HEK293 (cell line): ENCODE measurements at regions of chr19 and their contacts with region 1.

Region 1: GRCh38 chr19:29610563-29611271 is 4.6 kb downstream of the POP4 start:
- H3K4me3 ChIP-seq: no peak overlapping the region
- H3K27ac ChIP-seq: no peak overlapping the region
- H3K4me1 ChIP-seq: peaks cover 7% of the 10 kb centered on the region
- CTCF ChIP-seq: peak; percentile 98

Region 2: DNA sequence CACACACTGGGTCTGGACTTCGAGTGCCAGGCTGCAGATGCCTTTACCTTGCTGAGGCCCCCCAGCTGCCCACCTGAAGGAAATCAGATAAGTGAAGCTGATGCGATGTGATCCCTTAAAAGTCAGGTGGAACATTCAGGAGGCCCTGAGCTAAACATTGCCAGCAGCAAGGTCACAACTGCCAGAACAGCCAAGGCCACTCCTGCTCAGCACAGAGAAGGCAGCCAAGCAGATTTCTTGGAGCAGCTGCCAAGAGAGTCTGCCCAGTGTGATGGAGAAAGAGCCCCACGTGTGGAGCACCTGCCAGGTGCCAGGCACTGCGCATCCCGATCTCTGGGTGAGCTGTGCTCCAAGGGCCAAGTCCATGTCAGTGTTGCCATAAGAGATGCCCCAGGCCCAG is 377.1 kb before region 1 on chr19:
- CTCF ChIA-PET with region 1: no interaction called
- POLR2A ChIA-PET with region 1: no interaction called
- H3K4me3 ChIP-seq: no peak overlapping the region
- H3K27ac ChIP-seq: no peak overlapping the region
- H3K4me1 ChIP-seq: no peaks in the 10 kb centered on the region
- CTCF ChIP-seq: no peak

Region 3: GRCh38 chr19:29587518-29587986 is 23.2 kb before region 1 on chr19:
- CTCF ChIA-PET with region 1: interaction called, 16 read pairs
- POLR2A ChIA-PET with region 1: interaction called, 12 read pairs
- H3K4me3 ChIP-seq: no peak overlapping the region
- H3K27ac ChIP-seq: no peak overlapping the region
- H3K4me1 ChIP-seq: peaks cover 18% of the 10 kb centered on the region
- CTCF ChIP-seq: no peak

Region 4: DNA sequence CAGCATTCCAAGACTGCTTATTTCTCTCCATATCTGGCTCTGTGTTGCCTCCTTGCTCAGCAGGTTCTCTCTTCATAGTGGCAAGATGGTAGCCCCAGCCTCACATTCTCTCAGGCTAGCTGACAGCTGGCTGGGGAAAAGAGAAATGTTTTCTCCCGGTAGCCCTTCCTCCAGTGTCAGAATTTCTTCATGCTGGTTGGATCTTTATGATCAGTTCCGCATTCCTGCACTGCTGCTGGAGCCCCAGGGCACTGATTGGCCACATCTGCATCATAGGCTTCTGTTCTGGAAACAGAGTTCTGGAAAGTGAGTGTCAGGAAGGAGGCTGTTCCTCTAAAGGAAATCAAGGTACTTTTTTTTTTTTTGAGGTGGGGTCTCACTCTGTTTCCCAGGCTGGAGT is 19.9 kb after region 1 on chr19:
- CTCF ChIA-PET with region 1: interaction called, 94 read pairs
- POLR2A ChIA-PET with region 1: interaction called, 9 read pairs
- H3K4me3 ChIP-seq: no peak overlapping the region
- H3K27ac ChIP-seq: no peak overlapping the region
- H3K4me1 ChIP-seq: no peaks in the 10 kb centered on the region
- CTCF ChIP-seq: no peak

Region 5: GRCh38 chr19:29671393-29672160 is 60.9 kb after region 1 on chr19:
- CTCF ChIA-PET with region 1: interaction called, 105 read pairs
- POLR2A ChIA-PET with region 1: interaction called, 37 read pairs
- H3K4me3 ChIP-seq: no peak overlapping the region
- H3K27ac ChIP-seq: peak overlapping the region; percentile 32
- H3K4me1 ChIP-seq: peaks cover 27% of the 10 kb centered on the region
- CTCF ChIP-seq: no peak

Region 6: GRCh38 chr19:29694669-29695627 is 84.2 kb after region 1 on chr19:
- CTCF ChIA-PET with region 1: interaction called, 184 read pairs
- POLR2A ChIA-PET with region 1: interaction called, 6 read pairs
- H3K4me3 ChIP-seq: no peak overlapping the region
- H3K27ac ChIP-seq: no peak overlapping the region
- H3K4me1 ChIP-seq: no peaks in the 10 kb centered on the region
- CTCF ChIP-seq: peak; percentile 98

Region 7: GRCh38 chr19:29735800-29736199 is 125.1 kb after region 1 on chr19:
- CTCF ChIA-PET with region 1: interaction called, 29 read pairs
- POLR2A ChIA-PET with region 1: interaction called, 7 read pairs
- H3K4me3 ChIP-seq: no peak overlapping the region
- H3K27ac ChIP-seq: no peak overlapping the region
- H3K4me1 ChIP-seq: no peaks in the 10 kb centered on the region
- CTCF ChIP-seq: no peak